Motor neuron (in vitro differentiated cells): ENCODE measurements at regions of chr16 and their contacts with region 1.

Region 1: GRCh38 chr16:82580298-82580890 is 46.4 kb upstream of the CDH13 start:
- ATAC-seq: peak in 5 of 8 experiments; percentile 28 to 91 (median 85)
- H3K4me3 ChIP-seq: no peak overlapping the region
- H3K27ac ChIP-seq: no peak overlapping the region
- H3K4me1 ChIP-seq: no peaks in the 10 kb centered on the region

Region 2: GRCh38 chr16:81060576-81061306 is 1519.7 kb before region 1 on chr16:
- in situ Hi-C with region 1: no loop called
- ATAC-seq: peak in 2 of 8 experiments; percentile 23 to 33
- H3K4me3 ChIP-seq: no peak overlapping the region
- H3K27ac ChIP-seq: no peak overlapping the region
- H3K4me1 ChIP-seq: no peaks in the 10 kb centered on the region

Region 3: DNA sequence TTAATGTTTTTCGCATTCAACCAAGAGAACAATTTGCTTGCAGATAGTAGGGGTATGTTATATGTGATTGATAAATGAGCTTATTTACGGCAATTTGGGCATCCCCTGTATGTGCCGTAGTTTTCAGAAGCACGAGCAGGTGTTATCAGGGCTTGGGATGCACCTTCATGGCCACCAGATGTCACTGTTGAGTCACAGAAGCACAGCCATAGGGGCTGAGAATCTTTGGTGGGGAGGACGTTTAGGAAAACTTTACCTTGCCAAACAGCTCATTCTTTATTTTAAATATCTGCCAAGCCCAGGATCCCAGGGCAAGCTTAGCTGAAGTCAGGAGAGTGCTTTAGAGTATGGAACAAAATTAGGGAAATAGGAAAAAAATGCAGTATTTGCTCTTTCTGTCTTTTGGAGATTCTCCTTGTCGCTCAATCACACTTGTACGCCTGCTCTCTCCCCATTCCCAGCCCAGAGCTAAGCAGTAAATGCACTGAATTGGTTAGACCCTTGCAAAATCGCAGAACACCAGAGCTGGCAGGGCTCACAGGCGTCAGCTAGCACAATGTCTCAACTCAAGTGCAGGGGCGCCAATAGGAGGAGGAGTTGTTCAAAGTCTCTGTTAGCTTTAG is 316.8 kb before region 1 on chr16:
- in situ Hi-C with region 1: loop called in 4 of 9 experiments (anchors 10 to 25 kb)
- ATAC-seq: peak; percentile 72 to 89 (median 80)
- H3K4me3 ChIP-seq: no peak overlapping the region
- H3K27ac ChIP-seq: no peak overlapping the region
- H3K4me1 ChIP-seq: peaks cover 7 to 10% of the 10 kb centered on the region in 2 donors

Region 4: DNA sequence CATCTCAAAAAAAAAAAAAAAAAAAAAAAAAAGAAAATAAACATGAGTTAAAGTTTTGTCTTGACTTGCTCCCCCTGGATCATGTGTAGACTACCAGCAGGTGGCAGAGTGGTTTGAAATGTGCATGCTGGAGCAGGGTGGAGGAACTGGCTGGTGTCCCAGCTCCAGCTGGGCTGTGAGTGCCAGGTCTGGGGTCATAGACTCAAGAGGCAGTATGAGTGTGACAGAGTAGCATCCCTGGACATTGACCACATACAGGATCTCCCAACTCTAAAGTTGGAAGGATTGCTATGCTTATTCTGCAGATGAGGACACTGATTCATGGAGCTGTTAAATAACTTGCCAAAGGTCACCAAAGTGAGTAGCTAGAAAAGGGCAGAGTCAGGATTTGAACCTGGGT is 212.4 kb before region 1 on chr16:
- in situ Hi-C with region 1: loop called in 1 of 9 experiments (anchors 25 kb)
- ATAC-seq: peak in 5 of 8 experiments; percentile 33 to 87 (median 77)
- H3K4me3 ChIP-seq: no peak overlapping the region
- H3K27ac ChIP-seq: no peak overlapping the region
- H3K4me1 ChIP-seq: no peaks in the 10 kb centered on the region